AG04450 (cell line): ENCODE measurements at regions of chr17 and their contacts with region 1.

Region 1: DNA sequence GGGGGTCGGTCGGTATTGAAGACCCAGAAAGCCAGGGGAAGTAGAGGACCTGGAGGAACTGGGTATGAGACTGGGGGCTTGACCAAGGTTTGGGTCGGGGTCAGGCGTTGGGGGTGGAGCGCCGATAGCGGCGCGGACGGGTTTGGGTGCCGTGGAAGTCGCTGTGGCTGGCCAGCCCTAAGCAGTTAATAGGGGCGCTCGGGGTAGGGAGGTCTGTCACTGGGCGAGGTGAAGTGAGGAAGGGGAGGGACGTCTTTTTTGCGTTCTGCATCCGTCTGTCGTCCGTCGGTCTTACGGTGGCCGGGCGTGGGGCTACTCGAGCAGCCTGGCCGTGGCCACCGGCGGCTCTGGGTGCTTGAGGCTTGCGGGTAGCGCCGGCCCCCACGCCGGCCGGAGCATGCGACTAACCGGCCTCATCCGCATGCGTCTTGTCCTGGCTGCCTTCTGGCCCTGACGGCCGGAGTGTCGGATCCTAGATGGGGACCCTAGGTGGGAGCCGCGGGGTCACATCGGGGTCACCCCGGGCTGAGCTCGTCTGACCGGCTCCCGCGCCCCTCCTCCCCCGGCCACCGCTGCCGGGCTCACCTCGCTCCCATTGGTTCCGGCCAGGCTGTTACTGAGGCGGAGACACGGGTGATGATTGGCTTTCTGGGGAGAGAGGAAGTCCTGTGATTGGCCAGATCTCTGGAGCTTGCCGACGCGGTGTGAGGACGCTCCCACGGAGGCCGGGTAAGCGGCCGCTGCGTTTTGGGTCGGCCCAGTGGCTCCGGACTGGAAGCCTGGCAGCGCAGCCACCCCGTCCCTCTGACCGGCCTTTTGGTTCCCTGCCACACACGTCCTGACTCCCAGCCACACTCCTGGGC is 10.3 kb upstream of the TMEM88 start:
- DNase-seq: peak; percentile 82
- H3K4me3 ChIP-seq: peak overlapping the region; percentile 59
- H3K27ac ChIP-seq: peak overlapping the region; percentile 99
- H3K27me3 ChIP-seq: no peaks in the 10 kb centered on the region
- CTCF ChIP-seq: no peak

Region 2: DNA sequence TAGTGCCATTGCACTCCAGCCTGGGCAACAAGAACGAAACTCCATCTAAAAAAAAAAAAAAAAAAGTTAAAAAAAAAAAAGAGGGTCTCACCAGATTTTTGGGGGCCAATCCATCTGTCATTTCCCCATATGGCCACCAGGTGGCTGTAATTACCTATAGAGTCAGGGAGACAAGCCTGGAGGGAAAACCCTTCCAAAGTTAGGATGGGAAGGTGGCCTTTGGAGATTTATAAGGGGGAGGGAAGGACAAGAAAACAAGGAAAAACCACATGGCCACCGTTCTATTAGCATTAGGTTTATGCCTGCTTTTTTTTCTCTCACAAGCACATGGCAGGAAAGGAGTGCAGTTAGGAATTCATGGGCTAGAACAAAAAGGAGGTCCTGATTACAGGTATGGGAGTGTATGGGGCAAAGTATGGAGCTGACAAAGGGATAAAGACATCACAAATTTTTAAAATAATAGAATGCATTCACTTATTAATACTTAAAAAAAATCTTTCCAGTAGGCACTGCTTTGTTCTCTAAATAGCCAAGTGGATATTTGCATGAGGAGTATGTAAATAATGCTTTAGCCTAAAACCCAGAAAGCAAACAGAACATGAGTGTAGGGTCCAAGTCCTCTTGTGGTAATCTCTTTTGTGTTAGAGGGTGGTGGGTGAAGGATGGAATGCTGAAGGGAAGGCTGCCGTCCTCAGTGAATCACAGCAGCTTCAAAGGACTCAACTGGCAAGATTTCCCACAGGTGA is 18.3 kb after region 1 on chr17:
- CTCF ChIA-PET with region 1: interaction called, 11 read pairs
- POLR2A ChIA-PET with region 1: interaction called, 30 read pairs
- DNase-seq: no peak
- H3K4me3 ChIP-seq: no peak overlapping the region
- H3K27ac ChIP-seq: no peak overlapping the region
- H3K27me3 ChIP-seq: no peaks in the 10 kb centered on the region
- CTCF ChIP-seq: peak; percentile 74

Region 3: DNA sequence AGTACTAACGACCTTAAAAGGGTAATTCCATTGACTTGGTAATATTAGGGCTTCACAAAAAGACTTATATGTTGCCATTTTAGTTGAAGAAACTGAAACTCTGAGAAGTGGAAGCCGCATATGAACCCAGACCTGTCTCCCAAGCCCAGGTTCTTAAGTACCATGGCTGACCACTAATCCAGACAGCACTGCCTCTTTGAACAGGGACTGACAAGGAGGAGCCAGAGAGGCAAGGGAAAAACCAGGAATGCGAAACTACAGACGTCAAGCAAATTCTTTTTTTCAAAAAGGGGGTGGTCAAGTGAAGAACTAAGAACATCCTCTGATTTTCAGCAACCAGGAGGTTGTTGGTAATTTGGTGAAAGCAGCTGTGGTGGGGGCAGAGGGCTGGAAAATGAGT is 28.5 kb after region 1 on chr17:
- CTCF ChIA-PET with region 1: no interaction called
- POLR2A ChIA-PET with region 1: no interaction called
- DNase-seq: no peak
- H3K4me3 ChIP-seq: no peak overlapping the region
- H3K27ac ChIP-seq: no peak overlapping the region
- H3K27me3 ChIP-seq: no peaks in the 10 kb centered on the region
- CTCF ChIP-seq: no peak

Region 4: DNA sequence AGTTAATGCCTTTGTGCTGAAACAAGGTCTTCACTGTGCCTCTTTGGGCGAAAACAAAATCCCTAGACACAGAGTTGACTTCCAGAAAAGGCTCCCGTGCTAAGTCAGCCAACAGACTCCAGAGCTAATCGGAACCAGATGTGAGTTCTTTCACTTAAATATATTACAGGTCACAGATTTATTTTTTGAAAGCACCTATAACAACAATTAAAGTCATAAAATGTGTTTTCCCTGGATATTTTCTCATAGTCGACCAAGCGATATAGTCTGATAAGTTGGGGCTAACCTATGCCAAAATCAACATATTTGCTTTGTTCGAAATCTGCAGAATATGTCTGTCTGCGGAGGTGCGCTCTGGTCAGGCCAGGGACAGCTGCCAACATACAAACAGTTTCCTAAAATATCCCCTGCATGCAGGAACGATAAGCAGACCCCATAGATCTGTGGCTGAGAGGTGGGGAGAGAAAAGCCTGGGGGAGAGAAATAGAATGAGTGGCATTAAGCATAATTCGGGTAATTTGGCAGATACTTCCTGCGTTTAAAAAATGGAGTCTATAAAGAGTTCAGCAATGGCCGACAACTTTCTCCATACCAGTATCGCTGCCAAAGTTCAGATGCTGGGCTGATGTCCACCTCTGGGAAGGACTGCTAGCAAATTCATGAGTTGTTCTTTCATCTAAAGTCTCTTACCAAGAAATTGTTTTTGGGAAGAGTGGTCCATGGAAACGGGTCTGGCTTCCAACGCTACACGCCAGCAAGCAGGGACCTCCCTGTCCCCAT is 836.8 kb after region 1 on chr17:
- CTCF ChIA-PET with region 1: no interaction called
- POLR2A ChIA-PET with region 1: no interaction called
- DNase-seq: no peak
- H3K4me3 ChIP-seq: peak overlapping the region; percentile 14; the same call in 1 of the 2 replicates
- H3K27ac ChIP-seq: peak overlapping the region; percentile 62
- H3K27me3 ChIP-seq: no peaks in the 10 kb centered on the region
- CTCF ChIP-seq: no peak